CD4-positive, alpha-beta memory T cell (primary cell): ENCODE measurements at regions of chr15 and their contacts with region 1.

Region 1: DNA sequence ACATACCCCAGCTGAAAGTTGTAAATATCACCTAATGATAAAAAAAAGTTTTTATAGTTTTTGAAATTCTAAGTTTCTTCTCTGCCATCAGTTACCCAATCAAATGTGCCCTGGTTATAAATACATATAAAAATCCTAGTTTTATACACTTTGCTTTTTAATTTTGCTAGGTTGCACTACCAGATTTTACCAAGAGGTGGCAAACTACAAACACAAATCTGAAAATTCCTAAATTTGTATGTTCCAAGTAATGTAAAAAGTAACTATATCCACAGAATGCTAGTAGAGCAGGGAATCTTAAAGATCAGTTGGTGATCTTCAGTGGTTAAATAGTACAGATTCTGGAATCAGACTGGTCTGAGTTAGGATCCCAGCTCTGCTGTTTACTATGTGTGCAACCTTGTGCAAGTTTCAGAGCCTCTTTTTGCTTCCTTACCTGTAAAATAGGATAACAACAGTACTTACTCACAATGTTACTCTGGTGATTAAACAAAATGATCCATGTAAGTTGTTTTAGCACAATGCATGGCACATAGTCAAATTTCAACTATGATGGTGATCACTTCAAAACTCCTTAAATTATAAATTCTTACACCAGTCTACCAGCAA is 11.0 kb downstream of the TRPM7 start:
- DNase-seq: peak in 4 of 5 donors; percentile 18 to 44 (median 30)
- H3K4me3 ChIP-seq: no peak overlapping the region
- H3K4me3 Mint-ChIP-seq: no peak overlapping the region
- H3K27ac ChIP-seq: no peak overlapping the region
- H3K27ac Mint-ChIP-seq: peak overlapping the region in 5 of 7 donors; percentile 19 to 56 (median 46)
- H3K4me1 ChIP-seq: peaks cover 21% of the 10 kb centered on the region
- H3K4me1 Mint-ChIP-seq: peaks cover 11 to 41% (median 29%) of the 10 kb centered on the region in 4 donors
- H3K27me3 ChIP-seq: no peaks in the 10 kb centered on the region
- H3K27me3 Mint-ChIP-seq: no peaks in the 10 kb centered on the region

Region 2: DNA sequence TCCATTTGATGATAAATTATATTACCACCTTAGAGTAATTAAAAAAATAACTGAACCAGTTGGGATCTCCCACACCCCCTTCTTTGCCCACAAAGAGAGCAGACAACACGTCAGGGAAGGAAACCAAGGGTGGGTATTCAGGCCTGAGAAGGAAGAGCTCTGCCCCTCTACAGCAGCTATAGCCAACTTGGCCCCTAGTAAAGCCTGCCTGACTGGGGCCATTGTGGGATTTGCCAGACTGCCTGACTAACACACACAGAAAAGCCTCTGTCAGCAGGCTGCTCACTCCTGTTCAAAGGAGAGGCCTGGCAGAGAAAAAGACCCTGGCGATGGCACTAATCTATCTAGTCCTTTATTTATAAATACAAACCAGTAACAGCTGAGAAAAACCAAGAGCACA is 598.0 kb before region 1 on chr15:
- CTCF ChIA-PET with region 1: no interaction called
- POLR2A ChIA-PET with region 1: no interaction called
- intact Hi-C with region 1: no loop called
- DNase-seq: no peak
- H3K4me3 ChIP-seq: no peak overlapping the region
- H3K4me3 Mint-ChIP-seq: no peak overlapping the region
- H3K27ac ChIP-seq: no peak overlapping the region
- H3K27ac Mint-ChIP-seq: no peak overlapping the region
- H3K4me1 ChIP-seq: no peaks in the 10 kb centered on the region
- H3K4me1 Mint-ChIP-seq: no peaks in the 10 kb centered on the region
- H3K27me3 ChIP-seq: no peaks in the 10 kb centered on the region
- H3K27me3 Mint-ChIP-seq: peaks cover 1 to 2% of the 10 kb centered on the region in 2 donors

Region 3: GRCh38 chr15:50686468-50687301 is 11.0 kb after region 1 on chr15 and contains the start of gene TRPM7:
- CTCF ChIA-PET with region 1: interaction called, 8 read pairs
- POLR2A ChIA-PET with region 1: interaction called, 6 read pairs
- intact Hi-C with region 1: loop called (anchors 1 kb)
- DNase-seq: peak; percentile 86 to 90 (median 90)
- H3K4me3 ChIP-seq: peak within 1 kb of the TSS; percentile 89 to 99
- H3K4me3 Mint-ChIP-seq: peak within 1 kb of the TSS; percentile 98 to 100 (median 99)
- H3K27ac ChIP-seq: peak within 1 kb of the TSS; percentile 99
- H3K27ac Mint-ChIP-seq: peak within 1 kb of the TSS; percentile 98 to 100 (median 99)
- H3K4me1 ChIP-seq: peaks cover 52% of the 10 kb centered on the region
- H3K4me1 Mint-ChIP-seq: peaks cover 32 to 61% (median 45%) of the 10 kb centered on the region in 4 donors
- H3K27me3 ChIP-seq: no peaks in the 10 kb centered on the region
- H3K27me3 Mint-ChIP-seq: no peaks in the 10 kb centered on the region
- total RNA-seq, gene TRPM7: 65.3 to 66.7 TPM

Region 4: GRCh38 chr15:50712018-50712417 is 36.4 kb after region 1 on chr15:
- CTCF ChIA-PET with region 1: no interaction called
- POLR2A ChIA-PET with region 1: no interaction called
- intact Hi-C with region 1: no loop called
- DNase-seq: no peak
- H3K4me3 ChIP-seq: no peak overlapping the region
- H3K4me3 Mint-ChIP-seq: no peak overlapping the region
- H3K27ac ChIP-seq: no peak overlapping the region
- H3K27ac Mint-ChIP-seq: peak overlapping the region in 5 of 7 donors; percentile 26 to 78 (median 60)
- H3K4me1 ChIP-seq: no peaks in the 10 kb centered on the region
- H3K4me1 Mint-ChIP-seq: no peaks in the 10 kb centered on the region
- H3K27me3 ChIP-seq: no peaks in the 10 kb centered on the region
- H3K27me3 Mint-ChIP-seq: no peaks in the 10 kb centered on the region

Region 5: GRCh38 chr15:50876989-50877360 is 201.3 kb after region 1 on chr15:
- CTCF ChIA-PET with region 1: interaction called, 27 read pairs
- POLR2A ChIA-PET with region 1: interaction called, 3 read pairs
- intact Hi-C with region 1: loop called (anchors 1 kb)
- DNase-seq: peak; percentile 56 to 76 (median 69)
- H3K4me3 ChIP-seq: peak overlapping the region in 1 of 2 donors; percentile 29
- H3K4me3 Mint-ChIP-seq: peak overlapping the region; percentile 49 to 87 (median 74)
- H3K27ac ChIP-seq: no peak overlapping the region
- H3K27ac Mint-ChIP-seq: peak overlapping the region in 5 of 7 donors; percentile 38 to 64 (median 58)
- H3K4me1 ChIP-seq: peaks cover 20% of the 10 kb centered on the region
- H3K4me1 Mint-ChIP-seq: peaks cover 12 to 41% (median 20%) of the 10 kb centered on the region in 4 donors
- H3K27me3 ChIP-seq: no peaks in the 10 kb centered on the region
- H3K27me3 Mint-ChIP-seq: peaks cover 0 to 6% of the 10 kb centered on the region in 2 donors

Region 6: GRCh38 chr15:50883903-50884302 is 208.3 kb after region 1 on chr15:
- CTCF ChIA-PET with region 1: interaction called, 21 read pairs
- POLR2A ChIA-PET with region 1: no interaction called
- intact Hi-C with region 1: loop called (anchors 1 kb)
- DNase-seq: no peak
- H3K4me3 ChIP-seq: no peak overlapping the region
- H3K4me3 Mint-ChIP-seq: peak overlapping the region in 1 of 8 donors; percentile 19
- H3K27ac ChIP-seq: no peak overlapping the region
- H3K27ac Mint-ChIP-seq: peak overlapping the region in 2 of 7 donors; percentile 19 to 57
- H3K4me1 ChIP-seq: peaks cover 24% of the 10 kb centered on the region
- H3K4me1 Mint-ChIP-seq: peaks cover 16 to 53% (median 30%) of the 10 kb centered on the region in 4 donors
- H3K27me3 ChIP-seq: no peaks in the 10 kb centered on the region
- H3K27me3 Mint-ChIP-seq: no peaks in the 10 kb centered on the region